ENCODE measurements at regions of chr18 and their contacts with region 1.

Region 1: GRCh38 chr18:26233225-26233624 is 7.0 kb downstream of the TAF4B start:
- DNase-seq: no peak

Region 2: DNA sequence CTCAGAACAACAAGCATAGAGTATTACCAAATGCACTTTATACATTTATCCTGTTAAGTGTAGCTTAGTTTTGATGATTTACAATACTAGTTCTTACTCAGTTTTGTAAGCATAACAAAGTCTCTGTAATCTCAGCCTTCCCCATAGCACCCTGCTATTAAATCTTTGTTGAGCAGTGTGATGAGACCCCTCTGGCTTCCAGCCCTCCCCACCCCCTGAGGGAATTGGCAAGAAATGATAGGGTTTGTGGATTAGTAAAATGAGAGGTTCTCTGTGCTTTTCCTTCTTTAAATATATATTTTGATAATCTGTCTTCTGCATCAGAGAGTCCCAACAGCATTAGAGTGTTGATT is 918.4 kb before region 1 on chr18:
- intact Hi-C with region 1: no loop called
- DNase-seq: no peak

Region 3: GRCh38 chr18:26040051-26040656 is 193.1 kb before region 1 on chr18:
- intact Hi-C with region 1: no loop called
- DNase-seq: no peak

Region 4: DNA sequence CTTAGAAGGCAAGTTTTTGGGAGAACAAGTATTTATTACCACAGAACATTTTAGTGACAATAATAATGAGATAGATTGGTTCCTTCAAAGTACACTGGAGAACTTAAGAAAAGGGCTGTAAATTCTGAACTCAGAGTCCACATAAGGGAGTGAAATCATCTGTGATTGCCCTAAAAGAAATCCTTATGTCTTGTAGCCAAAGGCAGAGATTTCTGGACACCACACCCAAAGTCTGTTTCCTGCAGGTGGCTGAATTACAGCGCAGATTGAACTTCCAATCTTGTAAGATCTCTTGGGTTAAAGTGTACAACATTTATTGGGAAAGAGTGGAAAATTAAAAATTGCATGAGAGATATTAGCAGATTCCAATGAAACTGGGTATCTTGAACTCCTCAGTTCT is 136.8 kb after region 1 on chr18:
- intact Hi-C with region 1: loop called in 1 of 2 experiments (anchors 5 kb)
- DNase-seq: no peak

Measured in posterior vena cava (tissue), 2 donors.